Heart right ventricle (tissue), 16 donors: ENCODE measurements at regions of chr7 and their contacts with region 1.

Region 1: GRCh38 chr7:76244781-76245391 is 43.2 kb downstream of the SRRM3 start:
- DNase-seq: no peak
- ATAC-seq: no peak
- H3K4me3 ChIP-seq: no peak overlapping the region
- H3K27ac ChIP-seq: no peak overlapping the region
- H3K4me1 ChIP-seq: no peaks in the 10 kb centered on the region
- H3K27me3 ChIP-seq: peaks cover 0 to 17% (median 0%) of the 10 kb centered on the region in 7 donors
- CTCF ChIP-seq: no peak

Region 2: DNA sequence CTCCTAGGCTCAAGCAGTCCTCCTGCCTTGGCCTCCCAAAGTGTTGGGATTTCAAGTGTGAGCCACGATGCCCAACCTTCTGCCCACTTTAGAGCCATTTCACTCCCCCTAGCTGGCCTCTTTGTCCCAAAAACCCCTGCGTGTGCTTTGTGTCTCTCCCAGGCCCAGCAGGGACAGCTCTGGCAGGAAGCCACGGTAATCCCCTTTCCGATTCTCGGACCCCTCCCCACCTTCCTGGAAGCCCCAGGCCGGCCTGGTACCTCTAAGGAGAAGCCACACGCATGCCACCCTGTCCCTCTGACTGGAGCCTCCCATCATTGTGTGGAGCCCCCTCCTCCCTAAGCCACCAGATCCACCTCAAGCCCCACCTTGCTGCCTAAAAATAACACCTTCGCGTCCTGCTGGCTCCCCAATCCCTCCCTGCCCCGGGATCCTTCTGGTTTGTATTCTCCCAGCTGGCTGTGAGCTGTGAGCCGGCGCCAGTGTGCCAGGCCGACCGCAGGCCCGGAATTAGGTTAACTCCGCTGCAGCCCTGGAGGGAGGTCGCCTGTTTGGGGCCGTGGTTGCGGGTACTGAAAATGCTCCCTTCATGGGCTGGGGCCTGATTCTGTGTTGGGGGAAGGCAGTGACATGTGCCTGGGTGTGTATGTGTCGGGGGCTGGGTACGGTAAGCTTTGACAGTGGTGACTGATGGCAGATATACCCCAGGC is 59.5 kb before region 1 on chr7:
- intact Hi-C with region 1: loop called in 1 of 10 experiments (anchors 10 kb)
- DNase-seq: no peak
- ATAC-seq: peak in 2 of 8 donors; percentile 29 to 44
- H3K4me3 ChIP-seq: no peak overlapping the region
- H3K27ac ChIP-seq: no peak overlapping the region
- H3K4me1 ChIP-seq: no peaks in the 10 kb centered on the region
- H3K27me3 ChIP-seq: peaks cover 0 to 5% (median 0%) of the 10 kb centered on the region in 7 donors
- CTCF ChIP-seq: no peak

Region 3: DNA sequence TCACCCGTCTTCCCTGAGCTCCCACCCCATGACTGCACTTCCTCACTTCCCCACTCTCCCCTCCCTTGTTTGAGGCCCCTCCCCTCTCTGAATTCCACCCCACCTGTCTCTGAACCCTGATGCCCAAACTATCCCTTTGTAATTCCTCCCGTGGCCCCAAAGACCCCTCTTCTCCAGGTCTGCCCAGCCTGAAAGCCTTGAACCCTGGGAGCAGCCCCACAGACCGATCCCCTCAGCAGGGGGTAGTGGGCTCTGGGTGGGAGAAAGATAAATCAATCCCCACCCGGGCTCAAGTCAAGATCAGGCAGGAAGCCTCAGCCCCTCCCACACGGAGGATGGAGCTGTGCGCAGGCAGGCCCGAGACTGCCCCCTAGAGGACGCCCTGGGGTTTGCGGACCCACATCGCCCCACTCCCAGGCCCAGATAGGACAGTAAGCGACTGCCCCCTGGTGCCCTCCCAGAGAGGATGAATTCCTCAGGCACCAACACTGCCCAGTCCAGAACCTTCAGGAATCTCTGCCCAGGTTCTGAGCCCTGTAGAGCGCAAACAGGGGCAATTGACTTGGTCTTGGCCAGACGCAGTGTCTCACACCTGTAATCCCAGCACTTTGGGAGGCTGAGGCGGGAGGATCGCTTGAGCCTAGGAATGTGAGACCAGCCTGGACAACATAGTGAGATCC is 69.3 kb after region 1 on chr7:
- intact Hi-C with region 1: no loop called
- DNase-seq: peak; percentile 96 to 98
- ATAC-seq: peak; percentile 60 to 77 (median 68)
- H3K4me3 ChIP-seq: no peak overlapping the region
- H3K27ac ChIP-seq: peak overlapping the region in 1 of 10 donors; percentile 12
- H3K4me1 ChIP-seq: peaks cover 9 to 36% (median 23%) of the 10 kb centered on the region in 9 donors
- H3K27me3 ChIP-seq: no peaks in the 10 kb centered on the region
- CTCF ChIP-seq: peak; percentile 100